ENCODE measurements at regions of chr15 and their contacts with region 1.

Region 1: DNA sequence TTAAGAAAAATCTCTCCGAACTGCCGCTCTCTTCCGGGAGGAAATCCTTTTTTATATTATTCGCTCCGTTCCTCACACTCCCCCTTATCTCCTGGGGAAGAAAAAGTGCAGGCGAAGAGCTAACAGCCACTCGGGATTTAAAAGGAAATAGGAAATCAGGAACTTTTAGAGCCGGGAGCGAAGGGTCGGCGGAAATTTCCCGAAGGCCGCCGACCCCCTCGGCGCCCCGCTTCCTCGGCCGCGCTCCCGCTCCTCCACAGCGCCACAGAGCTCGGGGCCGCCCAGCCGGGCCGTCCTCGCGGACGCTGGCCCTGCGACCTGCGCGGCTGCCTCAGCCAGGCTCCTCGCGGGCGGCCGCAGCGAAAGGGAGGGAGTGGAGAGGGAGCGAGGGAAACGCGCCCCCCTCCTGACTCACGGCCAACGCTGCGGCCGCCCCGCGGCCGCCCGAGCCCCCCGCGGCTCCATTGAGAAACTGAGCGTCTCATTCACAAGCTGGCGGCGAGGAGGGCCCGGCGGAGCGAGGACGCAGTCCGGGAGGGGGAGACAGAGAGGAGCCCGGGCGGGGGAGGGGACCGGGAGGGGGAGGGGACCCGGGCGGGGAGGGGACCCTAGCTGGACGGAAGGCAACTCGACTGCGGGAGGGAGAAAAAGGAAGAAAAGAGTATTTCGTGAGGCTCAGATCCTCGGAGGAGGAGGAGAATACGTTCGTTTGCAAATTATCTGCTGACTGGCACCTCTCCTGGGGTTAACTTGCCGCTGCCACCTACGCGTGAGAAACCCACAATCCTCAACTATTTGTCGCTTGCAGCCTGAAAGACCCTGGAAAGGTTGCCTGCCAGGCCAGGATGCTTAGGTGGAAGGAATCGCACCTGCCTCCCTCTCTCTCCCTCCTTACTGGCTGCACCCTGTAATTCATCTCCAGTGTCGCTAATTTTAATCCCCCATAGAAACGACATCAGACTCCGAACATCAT is at the start of gene PTPN9:
- DNase-seq: no peak
- H3K4me3 ChIP-seq: peak within 1 kb of the TSS; percentile 92 to 96
- H3K27ac ChIP-seq: peak within 1 kb of the TSS; percentile 94
- H3K4me1 ChIP-seq: peaks cover 18% of the 10 kb centered on the region
- H3K27me3 ChIP-seq: no peaks in the 10 kb centered on the region
- CTCF ChIP-seq: no peak
- POLR2A ChIP-seq: peak in 1 of 2 donors; percentile 27
- total RNA-seq, gene PTPN9: 18.2 TPM

Region 2: GRCh38 chr15:75431682-75432081 is 147.6 kb before region 1 on chr15:
- intact Hi-C with region 1: no loop called
- DNase-seq: no peak
- H3K4me3 ChIP-seq: no peak overlapping the region
- H3K27ac ChIP-seq: no peak overlapping the region
- H3K4me1 ChIP-seq: peaks cover under 1% of the 10 kb centered on the region
- H3K27me3 ChIP-seq: no peaks in the 10 kb centered on the region
- CTCF ChIP-seq: no peak
- POLR2A ChIP-seq: no peak

Region 3: GRCh38 chr15:75532413-75533147 is 46.7 kb before region 1 on chr15:
- intact Hi-C with region 1: loop called (anchors 5 kb)
- DNase-seq: no peak
- H3K4me3 ChIP-seq: no peak overlapping the region
- H3K27ac ChIP-seq: peak overlapping the region; percentile 17
- H3K4me1 ChIP-seq: peaks cover 34% of the 10 kb centered on the region
- H3K27me3 ChIP-seq: no peaks in the 10 kb centered on the region
- CTCF ChIP-seq: peak in 1 of 3 experiments; percentile 27
- POLR2A ChIP-seq: no peak

Region 4: DNA sequence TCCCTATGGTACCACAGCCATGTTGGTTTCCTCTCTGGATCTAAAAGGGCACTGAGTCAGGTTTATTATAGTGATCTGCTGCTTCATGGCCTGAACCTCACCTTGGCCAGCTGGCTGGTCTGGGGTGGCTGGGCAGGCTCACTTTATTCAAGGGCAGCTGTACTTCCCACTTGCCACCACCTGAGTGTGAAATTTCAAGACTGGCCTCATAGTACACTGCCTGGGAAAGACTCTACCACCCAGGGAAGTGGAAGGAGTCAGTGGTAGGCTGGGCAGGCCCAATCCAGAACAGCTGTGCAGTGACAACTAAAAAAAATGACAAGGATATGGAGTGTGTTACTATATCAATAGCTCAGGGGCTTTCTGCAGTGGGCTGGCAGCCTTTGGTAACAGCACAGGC is 37.5 kb after region 1 on chr15:
- intact Hi-C with region 1: loop called (anchors 5 kb)
- DNase-seq: no peak
- H3K4me3 ChIP-seq: no peak overlapping the region
- H3K27ac ChIP-seq: no peak overlapping the region
- H3K4me1 ChIP-seq: peaks cover 20% of the 10 kb centered on the region
- H3K27me3 ChIP-seq: no peaks in the 10 kb centered on the region
- CTCF ChIP-seq: no peak
- POLR2A ChIP-seq: no peak

Region 5: GRCh38 chr15:75651277-75652033 is 72.2 kb after region 1 on chr15:
- intact Hi-C with region 1: no loop called
- DNase-seq: no peak
- H3K4me3 ChIP-seq: peak overlapping the region; percentile 67 to 70
- H3K27ac ChIP-seq: peak overlapping the region; percentile 93
- H3K4me1 ChIP-seq: peaks cover 87% of the 10 kb centered on the region
- H3K27me3 ChIP-seq: no peaks in the 10 kb centered on the region
- CTCF ChIP-seq: no peak
- POLR2A ChIP-seq: no peak